Activated CD8-positive, alpha-beta memory T cell treated with anti-CD3 and anti-CD28 coated beads, Interleukin-2, amount 10 ng/mL, durations not matched to agents 7 days and 5 days (primary cell): ENCODE measurements at regions of chr15 and their contacts with region 1.

Region 1: GRCh38 chr15:57527382-57528091 is 64.2 kb upstream of the MYZAP start:
- DNase-seq: no peak
- ATAC-seq: peak; percentile 9
- H3K4me3 Mint-ChIP-seq: no peak overlapping the region
- H3K27ac Mint-ChIP-seq: no peak overlapping the region
- H3K4me1 Mint-ChIP-seq: no peaks in the 10 kb centered on the region
- H3K27me3 Mint-ChIP-seq: peaks cover 47% of the 10 kb centered on the region

Region 2: DNA sequence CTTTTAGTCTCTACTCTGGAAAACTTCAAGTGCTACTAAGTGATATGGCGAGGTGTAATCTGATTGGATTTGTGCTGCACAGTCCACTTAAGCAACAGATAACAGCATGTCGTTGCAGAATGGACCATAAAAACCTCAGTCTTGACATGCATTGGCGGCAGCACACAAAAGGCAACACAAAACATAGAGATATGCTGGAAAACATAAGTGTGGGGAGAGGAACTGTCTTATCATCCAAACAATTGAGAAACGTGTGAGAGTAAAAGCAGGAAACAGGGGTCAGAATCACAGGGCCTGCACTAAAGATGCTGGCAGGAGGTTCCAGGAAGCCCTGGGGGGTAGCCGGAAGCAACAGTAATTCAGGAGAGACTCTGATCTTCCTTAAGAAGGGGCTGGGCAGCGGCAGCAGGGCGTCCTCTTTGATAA is 69.2 kb before region 1 on chr15:
- CTCF ChIA-PET with region 1: no interaction called
- DNase-seq: no peak
- ATAC-seq: no peak
- H3K4me3 Mint-ChIP-seq: no peak overlapping the region
- H3K27ac Mint-ChIP-seq: no peak overlapping the region
- H3K4me1 Mint-ChIP-seq: no peaks in the 10 kb centered on the region
- H3K27me3 Mint-ChIP-seq: peaks cover 18% of the 10 kb centered on the region

Region 3: GRCh38 chr15:57541805-57542504 is 14.4 kb after region 1 on chr15:
- CTCF ChIA-PET with region 1: interaction called, 18 read pairs
- DNase-seq: peak; percentile 50
- ATAC-seq: no peak
- H3K4me3 Mint-ChIP-seq: no peak overlapping the region
- H3K27ac Mint-ChIP-seq: no peak overlapping the region
- H3K4me1 Mint-ChIP-seq: no peaks in the 10 kb centered on the region
- H3K27me3 Mint-ChIP-seq: peaks cover 10% of the 10 kb centered on the region